Stomach (tissue), 19 donors: ENCODE measurements at regions of chr16 and their contacts with region 1.

Region 1: GRCh38 chr16:68040507-68041288 is 17.6 kb downstream of the DUS2 start:
- DNase-seq: peak; percentile 90
- H3K4me3 ChIP-seq: no peak overlapping the region
- H3K27ac ChIP-seq: peak overlapping the region in 2 of 5 donors; percentile 22 to 24
- H3K4me1 ChIP-seq: peaks cover 0 to 23% (median 3%) of the 10 kb centered on the region in 4 donors
- H3K27me3 ChIP-seq: no peaks in the 10 kb centered on the region
- CTCF ChIP-seq: peak in 5 of 7 experiments; percentile 81 to 90 (median 89)
- EP300 ChIP-seq: no peak
- POLR2A ChIP-seq: no peak

Region 2: DNA sequence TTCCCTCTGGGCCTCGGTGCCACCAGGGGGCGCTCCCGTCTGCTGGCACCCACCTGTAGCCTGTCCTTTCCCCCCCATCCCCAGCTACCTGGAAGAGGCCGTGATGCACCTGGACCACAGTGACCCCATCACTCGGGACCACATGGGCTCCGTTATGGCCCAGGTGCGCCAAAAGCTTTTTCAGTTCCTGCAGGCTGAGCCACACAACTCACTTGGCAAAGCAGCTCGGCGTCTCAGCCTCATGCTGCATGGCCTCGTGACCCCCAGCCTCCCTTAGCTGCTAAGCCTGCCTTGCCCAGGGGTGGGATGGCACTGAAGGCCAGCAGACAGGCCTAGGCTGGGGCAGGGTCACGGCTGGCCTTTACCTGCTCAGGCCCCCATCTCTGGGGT is 156.8 kb before region 1 on chr16:
- intact Hi-C with region 1: loop called (anchors 5 kb)
- DNase-seq: peak; percentile 76 to 83
- H3K4me3 ChIP-seq: no peak overlapping the region
- H3K27ac ChIP-seq: peak overlapping the region in 3 of 5 donors; percentile 33 to 80 (median 47)
- H3K4me1 ChIP-seq: peaks cover 12 to 27% (median 15%) of the 10 kb centered on the region in 4 donors
- H3K27me3 ChIP-seq: no peaks in the 10 kb centered on the region
- CTCF ChIP-seq: peak in 5 of 7 experiments; percentile 59 to 91 (median 81)
- EP300 ChIP-seq: no peak
- POLR2A ChIP-seq: no peak

Region 3: DNA sequence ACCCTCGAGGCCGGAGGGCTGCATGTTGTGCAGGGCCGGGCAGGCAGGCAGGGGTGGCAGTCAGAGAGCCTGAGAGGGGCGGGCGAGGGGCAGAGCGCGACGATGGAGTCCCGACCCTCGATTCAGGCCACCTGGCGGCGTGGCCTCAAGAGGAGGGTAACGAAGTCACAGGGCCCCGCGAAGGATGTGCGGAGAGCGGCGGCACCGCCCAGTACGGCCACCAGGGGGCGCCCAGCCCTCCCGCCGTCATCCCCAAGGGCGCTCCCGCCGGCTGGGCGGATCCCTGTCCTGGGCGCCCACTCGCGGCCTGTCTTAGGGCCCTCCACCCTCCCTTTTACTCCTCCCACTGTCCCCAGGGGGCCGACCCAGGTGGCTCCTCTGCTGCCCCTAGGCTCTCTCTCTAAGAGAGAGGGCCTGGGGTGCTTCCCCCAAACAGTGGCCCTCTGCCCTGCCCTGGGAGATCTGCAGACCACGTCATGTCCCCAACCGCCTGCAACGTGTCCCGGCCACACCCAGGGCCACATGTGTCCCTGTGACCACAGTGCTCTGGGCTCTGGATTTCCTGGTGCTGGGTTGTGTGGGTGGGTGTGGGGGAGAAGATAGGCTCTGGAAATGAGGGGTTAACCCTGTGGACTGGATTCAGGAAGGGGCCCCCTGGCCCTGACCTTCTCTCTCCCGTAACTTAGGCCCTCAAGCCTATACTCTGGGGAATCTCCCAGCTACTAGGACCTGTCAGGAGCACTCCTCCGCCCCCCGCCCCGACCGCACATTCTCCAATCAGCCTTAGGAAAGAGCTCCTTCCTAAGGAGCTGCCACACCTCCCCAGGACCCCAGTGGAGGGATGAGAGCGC is 47.3 kb before region 1 on chr16:
- intact Hi-C with region 1: loop called (anchors 5 kb)
- DNase-seq: peak; percentile 82 to 93
- H3K4me3 ChIP-seq: peak overlapping the region; percentile 36 to 44 (median 42)
- H3K27ac ChIP-seq: peak overlapping the region; percentile 2 to 80 (median 72)
- H3K4me1 ChIP-seq: peaks cover 11 to 21% (median 13%) of the 10 kb centered on the region in 4 donors
- H3K27me3 ChIP-seq: no peaks in the 10 kb centered on the region
- CTCF ChIP-seq: peak in 6 of 7 experiments; percentile 50 to 100 (median 96)
- EP300 ChIP-seq: no peak
- POLR2A ChIP-seq: no peak

Region 4: GRCh38 chr16:68128577-68129305 is 88.0 kb after region 1 on chr16:
- intact Hi-C with region 1: no loop called
- DNase-seq: no peak
- H3K4me3 ChIP-seq: no peak overlapping the region
- H3K27ac ChIP-seq: no peak overlapping the region
- H3K4me1 ChIP-seq: peaks cover 0 to 27% (median 15%) of the 10 kb centered on the region in 4 donors
- H3K27me3 ChIP-seq: no peaks in the 10 kb centered on the region
- CTCF ChIP-seq: no peak
- EP300 ChIP-seq: no peak
- POLR2A ChIP-seq: no peak